GM23248 (cell line): ENCODE measurements at regions of chr7 and their contacts with region 1.

Region 1: DNA sequence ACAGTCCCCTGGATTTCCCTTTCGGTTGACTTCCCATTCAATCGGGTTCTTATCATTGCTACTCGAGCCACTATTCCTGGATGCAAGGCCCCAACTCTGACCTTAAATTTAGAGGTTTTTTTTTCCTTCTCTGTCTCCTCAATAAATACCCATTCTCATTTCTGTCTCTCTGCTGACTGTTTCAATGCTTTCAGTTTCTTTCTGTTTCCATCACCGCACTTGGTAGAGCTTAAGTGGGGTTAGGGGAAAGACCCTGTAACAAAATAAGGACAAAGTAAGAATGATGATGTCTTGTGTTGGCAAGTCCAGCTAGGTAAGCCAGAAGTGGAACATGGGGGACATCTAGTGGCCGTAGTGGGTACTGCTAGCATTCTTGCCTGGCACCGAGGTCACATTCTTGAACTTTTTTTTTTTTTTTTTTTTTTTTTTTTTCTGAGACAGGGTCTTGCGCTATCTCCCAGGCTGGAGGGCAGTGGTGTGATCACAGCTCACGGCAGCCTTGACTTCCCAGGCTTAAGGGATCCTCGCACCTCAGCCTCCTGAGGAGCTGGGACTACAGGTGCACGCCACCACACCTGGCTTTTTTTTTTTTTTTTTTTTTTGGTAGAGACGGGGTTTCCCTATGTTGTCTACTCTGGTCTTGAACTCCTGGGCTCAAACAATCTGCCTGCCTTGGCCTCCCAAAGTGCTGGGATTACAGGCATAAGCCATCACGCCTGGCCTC is 40.3 kb downstream of the ZC3HC1 start:
- DNase-seq: peak; percentile 72
- H3K4me3 ChIP-seq: no peak overlapping the region
- H3K27ac ChIP-seq: peak overlapping the region; percentile 93
- H3K4me1 ChIP-seq: peaks cover 12% of the 10 kb centered on the region
- H3K27me3 ChIP-seq: no peaks in the 10 kb centered on the region

Region 2: DNA sequence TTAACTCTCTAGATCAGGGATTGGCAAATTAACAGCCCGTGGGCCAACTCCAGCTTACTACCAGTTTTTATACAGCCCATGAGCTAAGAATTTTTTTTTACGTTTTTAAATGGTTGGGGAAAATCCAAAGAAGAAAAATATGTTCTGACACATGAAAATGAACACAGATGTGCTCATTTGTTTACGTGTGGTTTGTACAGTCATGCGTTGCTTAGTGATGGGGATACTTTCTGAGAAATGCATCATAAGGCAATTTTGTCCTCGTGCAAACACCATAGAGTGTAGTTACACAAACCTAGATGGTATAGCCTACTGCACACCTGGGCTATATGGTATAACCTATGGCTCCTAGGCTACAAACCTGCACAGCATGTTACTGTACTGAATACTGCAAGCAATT is 516.8 kb before region 1 on chr7:
- in situ Hi-C with region 1: loop called (anchors 25 kb)
- DNase-seq: peak; percentile 93
- H3K4me3 ChIP-seq: no peak overlapping the region
- H3K27ac ChIP-seq: peak overlapping the region; percentile 66
- H3K4me1 ChIP-seq: peaks cover 29% of the 10 kb centered on the region
- H3K27me3 ChIP-seq: no peaks in the 10 kb centered on the region

Region 3: GRCh38 chr7:129664029-129665012 is 346.5 kb before region 1 on chr7:
- in situ Hi-C with region 1: loop called (anchors 10 kb)
- DNase-seq: peak; percentile 86
- H3K4me3 ChIP-seq: no peak overlapping the region
- H3K27ac ChIP-seq: peak overlapping the region; percentile 25; the same call in 1 of the 2 replicates
- H3K4me1 ChIP-seq: peaks cover 11% of the 10 kb centered on the region
- H3K27me3 ChIP-seq: no peaks in the 10 kb centered on the region

Region 4: DNA sequence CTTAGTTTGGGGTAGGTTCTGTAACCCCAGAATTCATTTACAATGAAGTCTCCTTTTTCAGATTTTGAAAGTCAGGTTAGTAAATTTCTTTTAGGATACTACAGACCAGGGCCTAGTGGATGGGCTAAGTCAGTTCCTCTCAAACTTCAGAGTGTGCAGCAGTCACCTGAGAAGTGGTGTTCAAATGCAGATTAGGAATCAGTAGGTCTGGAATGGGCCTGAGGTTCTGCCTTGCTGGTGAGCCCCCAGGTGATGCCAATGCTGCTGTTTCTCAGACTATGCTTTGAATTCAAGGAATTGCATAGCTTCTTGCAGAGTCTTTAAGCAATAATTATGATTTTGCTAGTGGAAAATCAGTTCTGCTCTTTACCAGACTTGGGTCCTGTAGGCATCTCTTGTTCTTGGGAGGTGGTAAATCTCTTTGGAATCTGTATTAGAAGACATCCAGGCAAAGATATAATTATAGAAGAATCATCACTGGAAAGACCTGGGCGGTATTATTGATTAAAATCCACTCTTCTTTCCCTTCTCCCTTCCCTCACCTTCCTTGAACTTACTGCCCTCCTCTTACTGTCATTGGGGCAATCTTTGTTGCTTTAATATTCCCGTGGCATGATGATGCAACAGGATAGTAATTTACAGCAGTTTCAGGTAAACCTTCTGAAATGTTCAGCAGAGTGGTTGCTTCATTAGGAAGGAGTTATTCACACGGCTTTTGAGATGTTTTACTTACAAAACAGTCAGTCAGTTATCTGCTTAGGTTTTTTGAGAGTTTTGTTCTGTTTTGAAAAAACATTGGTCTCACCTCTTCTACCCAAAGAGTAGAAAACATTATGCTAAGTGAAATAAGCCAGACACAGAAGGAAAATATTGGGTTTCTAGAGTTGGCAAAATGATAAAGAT is 312.1 kb before region 1 on chr7:
- in situ Hi-C with region 1: no loop called
- DNase-seq: no peak
- H3K4me3 ChIP-seq: no peak overlapping the region
- H3K27ac ChIP-seq: no peak overlapping the region
- H3K4me1 ChIP-seq: 0 out of 2 replicates have a peak, but pooled peaks cover 4% of the 10 kb centered on the region
- H3K27me3 ChIP-seq: no peaks in the 10 kb centered on the region

Region 5: GRCh38 chr7:129845178-129845971 is 165.5 kb before region 1 on chr7:
- in situ Hi-C with region 1: loop called (anchors 10 kb)
- DNase-seq: peak; percentile 88
- H3K4me3 ChIP-seq: peak overlapping the region; percentile 30; the same call in 1 of the 2 replicates
- H3K27ac ChIP-seq: peak overlapping the region; percentile 94
- H3K4me1 ChIP-seq: peaks cover 41% of the 10 kb centered on the region
- H3K27me3 ChIP-seq: no peaks in the 10 kb centered on the region